ENCODE measurements at regions of chr6 and their contacts with region 1.

Region 1: DNA sequence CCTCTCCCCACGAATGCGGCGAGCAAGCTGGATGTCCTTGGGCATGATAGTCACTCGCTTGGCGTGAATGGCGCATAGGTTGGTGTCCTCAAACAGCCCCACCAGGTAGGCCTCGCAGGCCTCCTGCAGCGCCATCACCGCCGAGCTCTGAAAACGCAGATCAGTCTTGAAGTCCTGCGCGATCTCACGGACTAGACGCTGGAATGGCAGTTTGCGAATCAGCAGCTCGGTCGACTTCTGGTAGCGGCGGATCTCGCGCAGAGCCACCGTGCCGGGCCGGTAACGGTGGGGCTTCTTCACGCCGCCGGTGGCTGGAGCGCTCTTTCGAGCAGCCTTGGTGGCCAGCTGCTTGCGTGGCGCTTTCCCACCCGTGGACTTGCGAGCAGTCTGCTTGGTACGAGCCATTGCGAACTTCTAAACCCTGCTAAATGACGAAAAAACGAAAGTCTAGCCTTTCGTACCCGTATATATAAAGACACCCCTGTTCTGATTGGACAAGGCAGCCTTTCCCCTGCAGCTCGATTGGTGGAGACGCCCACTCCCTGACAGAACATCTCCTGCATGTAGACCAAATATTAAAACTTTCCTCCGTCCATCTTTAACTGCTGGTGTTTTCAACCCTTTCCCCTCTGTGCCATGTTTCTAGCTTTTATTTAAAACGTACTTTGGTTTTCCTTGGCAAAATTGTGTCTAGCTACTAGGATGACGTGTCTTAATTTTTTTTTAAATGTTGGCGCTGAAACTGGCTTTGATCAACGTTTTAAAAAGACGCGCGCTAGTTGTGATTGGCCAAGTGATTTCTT is 109.8 kb downstream of the HFE start:
- DNase-seq: no peak

Region 2: GRCh38 chr6:25874822-25875562 is 322.1 kb before region 1 on chr6:
- CTCF ChIA-PET with region 1: no interaction called
- POLR2A ChIA-PET with region 1: no interaction called
- DNase-seq: no peak

Region 3: GRCh38 chr6:26025894-26026832 is 170.9 kb before region 1 on chr6:
- CTCF ChIA-PET with region 1: no interaction called
- POLR2A ChIA-PET with region 1: interaction called, 44 read pairs
- DNase-seq: peak; percentile 55

Region 4: DNA sequence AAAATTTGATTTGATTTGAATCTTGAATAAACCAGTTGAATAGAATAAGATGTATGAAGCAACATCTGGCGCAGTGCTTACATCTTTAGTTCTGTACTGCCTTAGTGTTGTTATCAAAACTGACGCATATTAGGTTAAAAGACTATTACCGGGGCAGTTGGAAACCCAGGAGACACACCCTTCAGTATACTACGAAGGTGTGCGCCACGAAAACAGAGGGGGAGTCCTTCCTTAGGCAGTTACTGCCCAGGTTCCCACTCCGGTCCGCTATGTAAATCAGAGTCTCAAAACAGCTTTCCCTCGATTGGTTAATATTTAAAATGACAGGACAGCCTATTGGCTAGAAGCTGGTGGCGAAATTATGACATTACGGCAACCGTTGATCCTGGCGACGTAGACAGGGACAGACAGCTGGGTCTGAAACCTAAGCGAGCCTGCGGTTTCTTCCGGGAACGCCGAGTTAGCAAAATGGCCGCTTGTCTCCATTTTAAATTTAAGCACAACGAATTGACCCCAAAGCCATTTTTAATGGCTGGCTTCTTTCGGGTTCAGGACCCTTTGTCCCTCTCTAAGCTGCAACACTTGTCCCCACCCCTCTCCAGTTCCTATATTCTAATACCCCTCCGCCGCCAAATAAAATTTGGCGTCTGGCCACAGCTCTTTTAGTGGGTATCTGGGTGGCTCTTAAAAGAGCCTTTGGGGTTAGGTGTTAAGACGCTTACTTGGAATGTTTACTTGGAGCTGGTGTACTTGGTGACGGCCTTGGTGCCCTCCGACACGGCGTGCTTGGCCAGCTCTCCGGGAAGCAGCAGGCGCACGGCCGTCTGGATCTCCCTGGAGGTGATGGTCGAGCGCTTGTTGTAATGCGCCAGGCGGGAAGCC is 74.0 kb before region 1 on chr6:
- CTCF ChIA-PET with region 1: no interaction called
- POLR2A ChIA-PET with region 1: interaction called, 79 read pairs
- DNase-seq: peak; percentile 71

Region 5: DNA sequence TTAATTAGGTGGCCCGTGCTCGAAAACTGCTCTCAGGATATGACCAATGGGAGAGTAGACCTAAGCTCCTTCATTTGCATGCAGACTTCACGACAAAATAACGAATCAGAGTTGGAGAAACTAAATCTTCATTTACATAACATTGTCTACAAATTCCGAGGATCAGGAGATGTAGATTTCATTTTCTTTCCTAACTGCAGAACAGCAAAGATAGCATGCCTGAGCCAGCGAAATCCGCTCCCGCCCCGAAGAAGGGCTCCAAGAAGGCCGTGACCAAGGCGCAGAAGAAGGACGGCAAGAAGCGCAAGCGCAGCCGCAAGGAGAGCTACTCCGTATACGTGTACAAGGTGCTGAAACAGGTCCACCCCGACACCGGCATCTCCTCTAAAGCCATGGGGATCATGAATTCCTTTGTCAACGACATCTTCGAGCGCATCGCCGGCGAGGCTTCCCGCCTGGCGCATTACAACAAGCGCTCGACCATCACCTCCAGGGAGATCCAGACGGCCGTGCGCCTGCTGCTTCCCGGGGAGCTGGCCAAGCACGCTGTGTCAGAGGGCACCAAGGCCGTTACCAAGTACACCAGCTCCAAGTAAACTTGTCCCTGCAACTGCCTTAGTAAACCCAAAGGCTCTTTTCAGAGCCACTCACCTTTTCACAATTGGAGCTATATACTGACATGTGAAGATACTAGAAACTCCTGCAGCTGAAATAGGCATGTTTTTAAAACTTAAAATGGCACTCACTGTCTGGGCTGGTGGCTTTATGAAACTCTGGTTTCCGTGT is 13.3 kb before region 1 on chr6:
- CTCF ChIA-PET with region 1: interaction called, 7 read pairs
- POLR2A ChIA-PET with region 1: interaction called, 167 read pairs
- DNase-seq: no peak

Region 6: DNA sequence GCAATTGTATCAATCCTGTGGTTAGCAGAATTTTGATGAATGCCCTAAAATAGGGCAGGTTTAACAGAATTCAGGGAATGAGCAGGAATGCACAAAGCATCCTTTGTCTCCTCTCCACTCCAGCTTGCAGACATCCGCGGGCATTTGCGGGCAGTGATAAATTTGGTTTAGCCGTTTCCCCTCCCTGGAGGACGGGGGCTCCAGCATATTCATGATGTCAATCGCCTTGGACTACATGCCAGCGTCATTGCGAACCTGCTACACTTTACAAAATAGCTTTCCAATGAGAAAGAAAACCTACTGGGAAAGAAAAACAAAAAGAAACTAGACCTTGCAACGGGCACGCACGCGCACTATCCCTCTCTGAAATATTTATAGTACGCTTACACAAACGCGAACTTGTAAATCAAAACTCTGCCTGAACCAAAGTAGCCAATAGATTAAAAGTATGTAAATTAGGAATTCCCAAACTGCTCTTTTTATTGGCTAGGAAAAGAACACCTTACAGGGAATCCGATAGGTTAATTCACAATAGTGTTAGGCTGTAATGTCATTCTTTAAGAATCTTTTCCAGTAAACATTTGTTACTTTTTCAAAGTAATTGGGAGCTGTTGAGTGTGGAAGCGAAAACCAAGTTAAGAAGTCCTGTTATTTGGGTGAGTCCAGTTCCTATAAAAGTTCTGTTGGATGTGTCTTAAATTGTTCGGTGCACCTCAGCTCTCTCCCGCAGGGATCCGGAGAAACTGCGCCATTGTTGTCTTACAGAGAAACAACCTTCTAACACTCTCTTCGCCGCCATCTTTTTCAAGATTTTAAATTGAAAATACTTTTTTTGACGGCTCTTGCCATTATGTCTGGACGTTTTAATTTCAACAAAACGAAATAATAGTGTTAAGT is 26.9 kb after region 1 on chr6:
- CTCF ChIA-PET with region 1: interaction called, 3 read pairs
- POLR2A ChIA-PET with region 1: interaction called, 22 read pairs
- DNase-seq: peak; percentile 63

Region 7: GRCh38 chr6:26249957-26250697 is 53.1 kb after region 1 on chr6:
- CTCF ChIA-PET with region 1: interaction called, 3 read pairs
- POLR2A ChIA-PET with region 1: interaction called, 29 read pairs
- DNase-seq: no peak

Region 8: GRCh38 chr6:27146706-27147505 is 949.9 kb after region 1 on chr6:
- CTCF ChIA-PET with region 1: interaction called, 3 read pairs
- POLR2A ChIA-PET with region 1: interaction called, 12 read pairs
- DNase-seq: peak; percentile 84

Measured in HEK293T (cell line).